ENCODE measurements at regions of chr16 and their contacts with region 1.

Region 1: GRCh38 chr16:27344731-27345151 is 31.0 kb downstream of the IL4R start:
- DNase-seq: no peak
- H3K4me3 ChIP-seq: no peak overlapping the region
- CTCF ChIP-seq: no peak
- POLR2A ChIP-seq: no peak

Region 2: GRCh38 chr16:27211026-27211425 is 133.7 kb before region 1 on chr16:
- intact Hi-C with region 1: loop called (anchors 1 kb)
- DNase-seq: no peak
- H3K4me3 ChIP-seq: no peak overlapping the region
- CTCF ChIP-seq: no peak
- POLR2A ChIP-seq: no peak

Region 3: GRCh38 chr16:27495191-27495590 is 150.4 kb after region 1 on chr16:
- intact Hi-C with region 1: no loop called
- DNase-seq: no peak
- H3K4me3 ChIP-seq: no peak overlapping the region
- CTCF ChIP-seq: no peak
- POLR2A ChIP-seq: no peak

Measured in lower leg skin (tissue), 4 donors.